HepG2 (cell line): ENCODE measurements at regions of chr16 and their contacts with region 1.

Region 1: DNA sequence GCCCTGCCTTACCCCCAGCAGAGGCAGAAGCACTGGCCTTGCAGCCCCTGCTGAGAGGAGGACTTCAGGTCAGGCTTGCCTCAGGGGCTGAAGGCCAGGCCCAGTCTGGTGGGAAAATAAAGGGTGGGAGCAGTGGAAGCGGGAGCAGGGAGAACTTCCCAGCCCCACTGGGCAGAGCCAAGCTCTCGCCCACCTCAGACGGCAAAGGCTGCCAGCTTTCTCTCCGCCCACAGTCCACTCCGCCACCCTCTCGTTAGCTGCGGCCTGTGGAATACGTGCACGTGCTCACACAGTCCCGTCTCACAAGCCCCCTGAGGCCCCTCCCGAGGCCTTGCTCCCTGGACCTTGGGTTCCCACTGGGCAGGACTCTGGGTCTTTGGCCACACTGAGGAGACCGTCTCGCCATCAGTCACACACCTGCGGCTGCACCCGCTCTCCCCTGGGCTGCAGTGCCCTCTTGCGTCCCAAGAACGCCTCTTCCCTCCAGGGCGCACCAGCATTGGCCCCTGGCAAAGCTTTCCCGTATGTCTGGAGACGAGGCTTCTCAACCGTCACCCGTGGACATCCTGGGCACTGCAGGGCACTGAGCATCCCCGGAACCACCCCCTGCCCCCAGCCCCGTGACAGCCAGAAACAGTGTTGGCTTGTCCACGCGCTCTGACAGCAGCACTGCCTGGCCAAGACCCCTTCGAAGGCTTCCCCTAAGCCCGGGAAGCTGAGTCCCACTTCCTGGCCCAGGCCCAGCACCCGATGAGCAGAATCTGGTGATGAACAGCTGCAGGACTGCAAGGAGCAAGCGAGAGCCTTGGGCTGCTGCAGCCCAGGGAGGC is 8.3 kb downstream of the MRPL28 start:
- DNase-seq: peak; percentile 75
- ATAC-seq: peak; percentile 79
- H3K4me3 ChIP-seq: peak overlapping the region; percentile 8 to 73 (median 13); a peak in 2 of 6 replicates
- H3K27ac ChIP-seq: peak overlapping the region; percentile 45
- H3K4me1 ChIP-seq: peaks cover 89% of the 10 kb centered on the region
- H3K27me3 ChIP-seq: peaks cover 1 to 13% of the 10 kb centered on the region in 2 experiments; a peak in 4 of 5 replicates
- CTCF ChIP-seq: peak; percentile 98
- EP300 ChIP-seq: no peak
- POLR2A ChIP-seq: peak in 1 of 2 experiments; percentile 51; a peak in 2 of 4 replicates
- RAD21 ChIP-seq: peak; percentile 96

Region 2: DNA sequence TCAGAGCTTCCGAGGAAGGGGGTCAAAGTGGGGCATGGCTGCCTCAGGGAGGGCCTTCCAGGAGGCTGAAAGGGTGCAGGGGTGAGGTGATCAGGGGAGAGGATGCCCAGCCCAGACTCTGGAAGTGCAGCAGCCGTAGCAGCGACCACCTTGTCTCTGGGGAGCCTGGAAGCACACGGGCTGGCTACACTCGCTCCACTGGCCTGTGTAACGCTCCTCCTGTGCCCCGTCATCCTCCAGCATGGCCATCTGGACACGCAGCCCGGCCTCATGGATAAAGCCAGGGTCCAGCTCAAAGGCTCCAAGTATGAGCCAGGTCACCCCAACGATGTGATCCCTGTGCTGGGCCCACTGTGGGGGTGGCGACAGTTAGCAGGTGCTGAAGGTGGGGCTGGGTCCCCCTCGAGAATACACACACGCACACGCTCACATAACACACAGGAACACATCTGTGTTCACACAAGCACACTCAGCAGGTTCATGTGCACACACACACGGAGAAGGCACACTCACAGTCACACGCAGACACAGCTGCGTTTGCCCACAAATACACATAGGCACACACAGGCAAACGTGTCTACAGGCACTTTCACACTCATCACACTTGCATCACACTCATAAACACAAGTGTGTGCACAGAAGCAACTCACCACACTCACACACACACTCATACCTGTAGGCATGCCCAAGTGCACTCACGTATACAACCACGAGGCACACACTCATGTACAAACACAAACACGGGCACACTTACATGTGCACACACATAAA is 328.0 kb before region 1 on chr16:
- CTCF ChIA-PET with region 1: no interaction called
- POLR2A ChIA-PET with region 1: no interaction called
- in situ Hi-C with region 1: no loop called
- intact Hi-C with region 1: no loop called
- DNase-seq: no peak
- ATAC-seq: no peak
- H3K4me3 ChIP-seq: no peak overlapping the region
- H3K27ac ChIP-seq: no peak overlapping the region
- H3K4me1 ChIP-seq: peaks cover 13% of the 10 kb centered on the region
- H3K27me3 ChIP-seq: no peaks in the 10 kb centered on the region
- CTCF ChIP-seq: no peak
- EP300 ChIP-seq: no peak
- POLR2A ChIP-seq: no peak
- RAD21 ChIP-seq: no peak

Region 3: GRCh38 chr16:117379-118365 is 244.4 kb before region 1 on chr16:
- CTCF ChIA-PET with region 1: no interaction called
- POLR2A ChIA-PET with region 1: no interaction called
- in situ Hi-C with region 1: no loop called
- intact Hi-C with region 1: loop called (anchors 5 kb)
- DNase-seq: peak; percentile 48
- ATAC-seq: peak; percentile 88
- H3K4me3 ChIP-seq: no peak overlapping the region
- H3K27ac ChIP-seq: no peak overlapping the region
- H3K4me1 ChIP-seq: peaks cover 11% of the 10 kb centered on the region
- H3K27me3 ChIP-seq: no peaks in the 10 kb centered on the region
- CTCF ChIP-seq: peak; percentile 83
- EP300 ChIP-seq: no peak
- POLR2A ChIP-seq: no peak
- RAD21 ChIP-seq: peak; percentile 77

Region 4: GRCh38 chr16:228818-229730 is 133.0 kb before region 1 on chr16 and contains the start of gene LUC7L:
- CTCF ChIA-PET with region 1: no interaction called
- POLR2A ChIA-PET with region 1: no interaction called
- in situ Hi-C with region 1: no loop called
- intact Hi-C with region 1: loop called (anchors 5 kb)
- DNase-seq: peak; percentile 79
- ATAC-seq: peak; percentile 96
- H3K4me3 ChIP-seq: peak within 1 kb of the TSS; percentile 91 to 99 (median 96)
- H3K27ac ChIP-seq: peak within 1 kb of the TSS; percentile 94
- H3K4me1 ChIP-seq: peaks cover 32% of the 10 kb centered on the region
- H3K27me3 ChIP-seq: no peaks in the 10 kb centered on the region; a peak in 1 of 5 replicates
- CTCF ChIP-seq: no peak
- EP300 ChIP-seq: peak in 1 of 2 experiments; percentile 30; a peak in 1 of 4 replicates
- POLR2A ChIP-seq: peak; percentile 85 to 97
- RAD21 ChIP-seq: peak; percentile 61
- total RNA-seq, gene LUC7L: 37.3 and 56.9 TPM in 2 replicates

Region 5: GRCh38 chr16:273573-273981 is 88.5 kb before region 1 on chr16:
- CTCF ChIA-PET with region 1: interaction called, 8 read pairs
- POLR2A ChIA-PET with region 1: no interaction called
- in situ Hi-C with region 1: loop called (anchors 5 kb)
- intact Hi-C with region 1: loop called (anchors 1 kb)
- DNase-seq: no peak
- ATAC-seq: peak; percentile 21
- H3K4me3 ChIP-seq: peak overlapping the region in 1 of 3 experiments; percentile 42; a peak in 1 of 6 replicates
- H3K27ac ChIP-seq: no peak overlapping the region
- H3K4me1 ChIP-seq: peaks cover 42% of the 10 kb centered on the region
- H3K27me3 ChIP-seq: peaks cover 20 to 74% of the 10 kb centered on the region in 2 experiments; a peak in 4 of 5 replicates
- CTCF ChIP-seq: no peak
- EP300 ChIP-seq: no peak
- POLR2A ChIP-seq: no peak
- RAD21 ChIP-seq: no peak